ENCODE measurements at regions of chr12 and their contacts with region 1.

Region 1: DNA sequence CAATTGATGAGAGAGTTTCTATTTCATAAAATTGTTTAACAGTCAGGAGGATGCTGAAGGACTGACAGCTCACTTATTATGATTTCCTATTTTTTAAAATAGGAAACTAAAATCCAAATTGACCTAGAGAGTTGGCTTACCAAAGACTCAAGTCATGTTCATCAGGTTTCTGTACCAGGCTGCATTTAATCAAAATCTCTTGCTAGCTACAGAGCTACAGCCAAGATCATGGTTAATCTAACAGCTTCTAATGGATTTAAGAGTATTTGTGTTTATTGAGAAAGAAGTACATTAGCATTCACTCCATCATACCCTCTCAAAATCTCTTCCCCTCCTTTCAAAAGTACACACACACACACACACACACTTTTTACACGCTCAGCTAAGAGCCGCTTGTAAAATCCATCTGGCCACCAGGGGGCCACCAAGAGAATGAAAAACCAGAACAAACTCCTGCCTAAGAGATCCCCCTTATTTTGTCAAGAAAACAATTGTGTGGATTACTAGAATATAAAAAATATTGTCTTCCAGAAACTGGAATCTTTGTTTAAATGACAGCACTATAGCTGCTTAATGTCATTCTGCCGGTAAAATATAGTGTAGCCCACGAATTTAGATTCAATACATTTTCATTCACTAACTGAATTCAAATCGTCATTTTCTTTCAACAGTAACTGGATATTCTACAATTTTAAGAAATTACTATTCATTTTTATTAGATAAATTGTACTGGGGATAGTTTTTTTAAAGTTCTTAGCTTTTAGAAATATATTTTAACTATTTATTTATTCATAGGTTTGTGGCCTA is 334.0 kb downstream of the BTG1 start:
- DNase-seq: peak; percentile 86

Region 2: GRCh38 chr12:91687052-91688017 is 124.3 kb before region 1 on chr12:
- intact Hi-C with region 1: no loop called
- DNase-seq: no peak

Region 3: DNA sequence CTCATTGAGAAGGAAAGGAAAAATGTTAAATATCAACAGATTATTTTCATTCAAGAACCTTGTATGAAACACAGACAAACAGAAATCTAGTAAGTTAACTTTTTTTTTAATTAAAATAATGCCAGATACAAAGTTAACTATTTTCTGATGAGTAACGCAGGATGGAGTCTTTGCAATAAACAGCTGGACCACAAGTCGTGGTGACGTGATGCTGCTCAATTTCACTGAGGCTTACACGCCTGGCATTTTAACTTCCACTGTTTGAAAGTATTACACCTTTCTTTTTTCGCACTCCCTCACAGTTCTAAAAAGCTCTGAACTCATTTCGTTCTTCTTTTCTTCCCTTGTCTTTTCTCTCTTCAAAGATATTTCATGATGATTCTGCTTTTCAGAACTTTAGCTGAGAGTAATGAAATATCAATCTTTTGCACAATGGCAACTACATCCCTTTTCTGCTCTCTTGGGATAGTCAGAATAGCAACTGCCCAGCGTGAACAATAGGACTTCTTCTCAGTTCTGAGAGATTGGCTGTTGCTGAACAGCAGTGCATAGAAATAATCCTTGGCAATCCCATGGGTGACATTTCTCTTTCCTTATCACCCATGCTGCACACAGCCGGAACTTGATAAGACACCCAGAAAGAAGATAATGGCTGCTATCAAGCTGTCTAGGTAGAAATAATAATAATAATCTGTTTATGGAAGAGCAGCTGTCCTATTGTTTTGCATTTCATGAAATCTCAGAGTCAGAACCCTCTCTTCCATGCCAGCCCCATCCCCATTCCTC is 173.5 kb after region 1 on chr12:
- intact Hi-C with region 1: loop called (anchors 10 kb)
- DNase-seq: no peak

Region 4: DNA sequence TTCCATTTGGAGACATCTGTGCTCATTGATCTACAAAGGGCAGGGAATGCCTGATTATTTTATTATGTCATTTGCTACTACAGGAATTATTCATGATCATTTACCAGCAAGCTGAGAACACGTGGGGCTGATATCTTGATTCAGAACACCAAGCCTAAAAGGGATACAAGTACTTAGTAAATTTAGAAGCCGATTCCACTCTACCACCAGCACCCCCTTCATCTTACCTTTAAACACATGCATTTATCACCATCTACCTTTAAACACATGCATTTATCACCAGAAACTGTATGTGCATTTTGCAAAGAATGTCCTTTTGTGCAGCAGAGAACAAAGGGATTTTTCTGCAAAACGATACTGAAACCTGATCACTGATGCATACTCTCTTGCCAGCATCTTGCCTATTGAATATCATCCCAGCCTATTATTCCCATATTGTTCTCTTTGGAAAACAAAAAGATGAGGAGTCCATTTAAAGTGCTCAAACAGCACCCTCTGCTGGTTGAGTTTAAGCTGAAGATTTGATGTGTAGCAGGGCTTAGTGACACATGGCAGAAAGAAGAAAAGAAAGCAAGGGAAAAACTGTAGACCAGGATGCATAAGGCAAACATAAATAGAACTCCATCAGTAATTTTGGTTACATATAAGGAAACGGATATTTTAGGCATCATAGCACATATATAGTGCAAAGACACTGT is 758.5 kb after region 1 on chr12:
- intact Hi-C with region 1: loop called (anchors 10 kb)
- DNase-seq: no peak